ENCODE measurements at regions of chr15 and their contacts with region 1.

Region 1: GRCh38 chr15:84035399-84035766 is 200.2 kb upstream of the GOLGA6L4 start:
- DNase-seq: no peak
- H3K4me3 ChIP-seq: no peak overlapping the region
- H3K27ac ChIP-seq: no peak overlapping the region
- H3K4me1 ChIP-seq: no peaks in the 10 kb centered on the region
- H3K27me3 ChIP-seq: no peaks in the 10 kb centered on the region
- CTCF ChIP-seq: peak; percentile 27 to 53 (median 32)
- EP300 ChIP-seq: no peak
- POLR2A ChIP-seq: no peak

Region 2: DNA sequence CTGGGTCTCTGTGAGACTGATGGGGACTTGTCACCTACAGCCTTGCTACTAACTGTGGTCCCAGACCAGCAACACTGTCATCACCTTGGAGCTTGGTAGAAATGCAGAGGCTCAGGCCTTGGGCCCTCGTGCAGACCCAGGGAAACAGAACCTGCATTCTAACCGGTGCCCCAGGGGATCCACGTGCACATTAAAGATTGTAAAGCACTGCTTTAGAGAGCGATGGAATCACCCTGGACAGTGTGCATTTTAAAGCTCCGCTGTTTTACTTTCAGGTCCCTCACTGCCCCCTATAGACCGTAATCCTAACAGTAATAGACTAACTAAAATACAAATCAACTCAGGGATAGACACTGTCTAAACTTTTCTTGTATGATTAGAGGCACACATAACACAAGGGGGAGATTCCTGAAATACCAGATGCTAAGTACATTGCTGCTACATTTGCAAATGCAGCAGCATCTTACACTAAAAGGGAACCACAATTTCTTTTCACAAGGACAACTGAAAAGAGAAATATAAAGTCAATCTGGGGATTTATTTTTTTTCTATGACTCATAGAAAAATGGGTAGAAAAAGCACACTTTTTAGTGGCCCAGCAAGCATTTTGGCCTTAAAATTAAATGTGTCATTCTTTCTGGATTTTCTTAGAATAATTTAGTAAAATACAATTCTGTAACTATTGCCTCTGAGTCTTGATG is 598.8 kb before region 1 on chr15:
- intact Hi-C with region 1: loop called (anchors 10 kb)
- DNase-seq: peak; percentile 80
- H3K4me3 ChIP-seq: no peak overlapping the region
- H3K27ac ChIP-seq: no peak overlapping the region
- H3K4me1 ChIP-seq: no peaks in the 10 kb centered on the region
- H3K27me3 ChIP-seq: peaks cover 0 to 20% (median 0%) of the 10 kb centered on the region in 4 donors
- CTCF ChIP-seq: peak; percentile 7 to 22 (median 22)
- EP300 ChIP-seq: no peak
- POLR2A ChIP-seq: no peak

Region 3: GRCh38 chr15:83943849-83944404 is 91.5 kb before region 1 on chr15:
- intact Hi-C with region 1: no loop called
- DNase-seq: no peak
- H3K4me3 ChIP-seq: no peak overlapping the region
- H3K27ac ChIP-seq: no peak overlapping the region
- H3K4me1 ChIP-seq: no peaks in the 10 kb centered on the region
- H3K27me3 ChIP-seq: no peaks in the 10 kb centered on the region
- CTCF ChIP-seq: no peak
- EP300 ChIP-seq: no peak
- POLR2A ChIP-seq: no peak

Region 4: GRCh38 chr15:83983634-83984458 is 51.5 kb before region 1 on chr15:
- intact Hi-C with region 1: no loop called
- DNase-seq: no peak
- H3K4me3 ChIP-seq: no peak overlapping the region
- H3K27ac ChIP-seq: no peak overlapping the region
- H3K4me1 ChIP-seq: no peaks in the 10 kb centered on the region
- H3K27me3 ChIP-seq: no peaks in the 10 kb centered on the region
- CTCF ChIP-seq: no peak
- EP300 ChIP-seq: no peak
- POLR2A ChIP-seq: no peak